Endothelial cell of umbilical vein (primary cell): ENCODE measurements at regions of chr13 and their contacts with region 1.

Region 1: GRCh38 chr13:107650081-107650701 is 565.1 kb downstream of the LIG4 start:
- DNase-seq: peak; percentile 78
- H3K4me3 ChIP-seq: no peak overlapping the region
- H3K27ac ChIP-seq: no peak overlapping the region
- H3K4me1 ChIP-seq: peaks cover 4% of the 10 kb centered on the region
- H3K27me3 ChIP-seq: no peaks in the 10 kb centered on the region
- CTCF ChIP-seq: peak; percentile 82 to 93
- POLR2A ChIP-seq: no peak

Region 2: DNA sequence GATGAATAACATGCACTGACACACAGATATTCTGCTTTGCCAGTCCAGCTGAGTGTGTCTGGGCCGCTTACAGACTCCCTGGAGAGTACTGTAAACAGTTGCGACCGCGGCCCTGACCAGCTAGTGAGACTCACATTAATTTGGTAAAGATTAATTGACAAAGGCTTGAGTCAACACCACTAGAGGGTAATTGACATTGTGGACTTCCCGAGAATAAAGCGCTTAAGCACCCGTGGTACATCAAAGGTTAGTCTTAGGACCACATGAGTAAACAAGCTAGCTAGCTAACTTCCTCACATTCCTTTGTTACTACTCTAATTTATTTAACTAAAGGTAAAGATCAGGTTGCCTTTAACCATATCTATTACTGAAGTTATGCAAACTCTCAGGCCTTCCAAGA is 457.9 kb before region 1 on chr13:
- CTCF ChIA-PET with region 1: no interaction called
- POLR2A ChIA-PET with region 1: no interaction called
- dilution Hi-C with region 1: no loop called
- intact Hi-C with region 1: no loop called
- DNase-seq: no peak
- H3K4me3 ChIP-seq: no peak overlapping the region
- H3K27ac ChIP-seq: no peak overlapping the region
- H3K4me1 ChIP-seq: no peaks in the 10 kb centered on the region
- H3K27me3 ChIP-seq: no peaks in the 10 kb centered on the region
- CTCF ChIP-seq: no peak
- POLR2A ChIP-seq: no peak

Region 3: GRCh38 chr13:107211073-107211472 is 439.1 kb before region 1 on chr13:
- CTCF ChIA-PET with region 1: interaction called, 38 read pairs
- POLR2A ChIA-PET with region 1: no interaction called
- dilution Hi-C with region 1: no loop called
- intact Hi-C with region 1: loop called (anchors 1 kb)
- DNase-seq: peak; percentile 92
- H3K4me3 ChIP-seq: no peak overlapping the region
- H3K27ac ChIP-seq: no peak overlapping the region
- H3K4me1 ChIP-seq: peaks cover 13% of the 10 kb centered on the region
- H3K27me3 ChIP-seq: no peaks in the 10 kb centered on the region
- CTCF ChIP-seq: peak; percentile 84 to 92
- POLR2A ChIP-seq: no peak

Region 4: DNA sequence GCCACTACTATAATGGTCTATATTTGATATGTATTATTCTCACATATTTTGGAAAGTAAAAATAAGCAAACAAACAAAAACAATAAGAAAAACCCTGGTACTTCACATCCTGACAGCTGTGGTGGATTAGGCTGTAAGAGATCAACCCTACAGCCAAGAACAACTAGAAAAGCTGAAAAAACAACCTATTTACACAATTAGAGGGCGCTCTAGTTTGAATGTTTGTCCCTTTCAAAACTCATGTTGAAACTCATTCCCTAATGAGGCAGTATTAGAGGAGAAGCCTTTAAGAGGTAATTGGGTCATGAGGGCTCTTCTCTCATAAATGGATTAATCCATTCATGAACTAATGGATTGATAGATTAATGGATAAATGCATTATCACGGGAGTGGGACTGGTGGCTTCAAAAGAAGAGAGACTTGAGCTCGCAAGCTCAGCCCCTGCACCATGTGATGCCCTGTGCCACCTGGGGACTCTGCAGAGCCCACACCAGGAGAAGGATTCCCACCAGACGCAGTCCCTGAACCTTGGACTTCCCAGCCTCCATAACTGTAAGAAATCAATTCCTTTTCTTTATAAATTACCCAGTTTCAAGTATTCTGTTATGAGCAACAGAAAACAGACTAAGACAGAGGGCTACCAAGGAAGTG is 348.3 kb before region 1 on chr13:
- CTCF ChIA-PET with region 1: interaction called, 24 read pairs
- POLR2A ChIA-PET with region 1: no interaction called
- dilution Hi-C with region 1: no loop called
- intact Hi-C with region 1: loop called (anchors 1 kb)
- DNase-seq: peak; percentile 17
- H3K4me3 ChIP-seq: no peak overlapping the region
- H3K27ac ChIP-seq: no peak overlapping the region
- H3K4me1 ChIP-seq: no peaks in the 10 kb centered on the region
- H3K27me3 ChIP-seq: no peaks in the 10 kb centered on the region
- CTCF ChIP-seq: peak in 1 of 2 donors; percentile 2
- POLR2A ChIP-seq: no peak

Region 5: DNA sequence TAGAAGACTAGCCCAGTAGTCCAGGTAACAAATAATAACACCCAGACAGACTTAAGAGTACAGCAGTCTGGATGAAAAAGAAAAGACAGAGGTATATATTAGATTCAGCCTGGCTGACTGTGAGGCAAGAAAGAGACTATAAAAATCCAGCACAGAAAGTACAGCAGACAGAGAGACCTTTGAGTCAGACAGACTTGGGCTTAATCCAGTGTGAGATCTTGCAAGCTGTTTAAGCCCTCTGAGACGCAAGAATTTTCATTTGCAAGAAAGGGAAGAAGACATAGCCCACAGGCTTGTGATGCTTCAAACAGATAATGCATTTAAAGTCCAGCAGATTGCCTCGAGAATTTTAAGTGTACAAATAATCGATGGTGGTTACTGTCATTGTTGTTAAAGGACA is 93.8 kb after region 1 on chr13:
- CTCF ChIA-PET with region 1: no interaction called
- POLR2A ChIA-PET with region 1: no interaction called
- dilution Hi-C with region 1: no loop called
- intact Hi-C with region 1: no loop called
- DNase-seq: no peak
- H3K4me3 ChIP-seq: no peak overlapping the region
- H3K27ac ChIP-seq: no peak overlapping the region
- H3K4me1 ChIP-seq: no peaks in the 10 kb centered on the region
- H3K27me3 ChIP-seq: no peaks in the 10 kb centered on the region
- CTCF ChIP-seq: no peak
- POLR2A ChIP-seq: no peak